GM12878 (cell line): ENCODE measurements at regions of chr7 and their contacts with region 1.

Region 1: GRCh38 chr7:92809397-92810241 is 26.8 kb downstream of the CDK6 start:
- DNase-seq: peak; percentile 92
- ATAC-seq: peak; percentile 76
- H3K4me3 ChIP-seq: peak overlapping the region; percentile 37; the same call in 1 of the 2 replicates
- H3K27ac ChIP-seq: peak overlapping the region; percentile 87
- H3K4me1 ChIP-seq: peaks cover 45% of the 10 kb centered on the region
- H3K27me3 ChIP-seq: no peaks in the 10 kb centered on the region
- CTCF ChIP-seq: no peak
- EP300 ChIP-seq: peak; percentile 89 to 96; a peak in 3 of 4 replicates
- POLR2A ChIP-seq: peak; percentile 54; the same call in 1 of the 2 replicates
- RAD21 ChIP-seq: no peak

Region 2: GRCh38 chr7:92633211-92633906 is 176.3 kb before region 1 on chr7:
- CTCF ChIA-PET with region 1: interaction called, 6 read pairs
- POLR2A ChIA-PET with region 1: interaction called, 4 read pairs
- RAD21 ChIA-PET with region 1: interaction called, 18 read pairs
- SMC1A ChIA-PET with region 1: interaction called, 7 read pairs
- in situ Hi-C with region 1: loop called (anchors 10 kb)
- intact Hi-C with region 1: loop called (anchors 1 kb)
- DNase-seq: no peak
- ATAC-seq: peak; percentile 16
- H3K4me3 ChIP-seq: no peak overlapping the region
- H3K27ac ChIP-seq: peak overlapping the region; percentile 61
- H3K4me1 ChIP-seq: peaks cover 48% of the 10 kb centered on the region
- H3K27me3 ChIP-seq: no peaks in the 10 kb centered on the region
- CTCF ChIP-seq: no peak
- EP300 ChIP-seq: peak in 1 of 2 experiments; percentile 60; a peak in 2 of 4 replicates
- POLR2A ChIP-seq: no peak
- RAD21 ChIP-seq: no peak

Region 3: DNA sequence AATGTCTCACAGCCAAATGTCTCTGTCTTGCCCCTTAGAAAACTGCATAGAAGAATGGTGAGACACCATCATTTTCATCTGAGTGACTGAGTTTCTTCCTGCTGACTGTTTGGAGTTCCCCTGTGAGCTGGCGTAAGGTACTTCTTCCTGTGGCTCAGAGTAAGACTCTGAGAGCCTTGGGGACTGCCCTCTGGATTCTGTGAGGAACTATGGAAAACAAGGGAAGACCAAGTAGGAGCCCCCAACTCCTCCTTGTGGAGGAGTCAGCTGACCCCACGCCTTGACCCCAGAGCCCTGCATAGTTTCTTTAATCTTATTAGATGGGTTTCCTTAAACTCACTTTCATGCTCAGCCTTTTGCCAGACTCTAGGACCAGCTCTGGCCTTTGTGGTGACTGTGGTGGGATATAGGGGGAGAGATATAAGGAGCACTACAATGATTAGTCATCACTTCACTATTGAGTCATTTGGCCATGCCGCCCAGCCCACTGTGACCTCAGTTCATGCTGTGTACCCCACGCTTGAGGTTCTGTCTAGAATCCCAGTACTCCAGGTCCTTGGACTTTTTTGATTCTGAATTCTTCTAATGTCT is 167.6 kb before region 1 on chr7:
- CTCF ChIA-PET with region 1: interaction called, 3 read pairs
- POLR2A ChIA-PET with region 1: interaction called, 6 read pairs
- RAD21 ChIA-PET with region 1: interaction called, 5 read pairs
- SMC1A ChIA-PET with region 1: interaction called, 18 read pairs
- in situ Hi-C with region 1: loop called (anchors 10 kb)
- intact Hi-C with region 1: no loop called
- DNase-seq: no peak
- ATAC-seq: peak; percentile 83
- H3K4me3 ChIP-seq: peak overlapping the region; percentile 39
- H3K27ac ChIP-seq: peak overlapping the region; percentile 73
- H3K4me1 ChIP-seq: peaks cover 25% of the 10 kb centered on the region
- H3K27me3 ChIP-seq: no peaks in the 10 kb centered on the region
- CTCF ChIP-seq: no peak
- EP300 ChIP-seq: peak; percentile 60 to 73; a peak in 3 of 4 replicates
- POLR2A ChIP-seq: no peak
- RAD21 ChIP-seq: 0 out of 2 replicates have a peak, but pooled peaks have one; percentile 4

Region 4: DNA sequence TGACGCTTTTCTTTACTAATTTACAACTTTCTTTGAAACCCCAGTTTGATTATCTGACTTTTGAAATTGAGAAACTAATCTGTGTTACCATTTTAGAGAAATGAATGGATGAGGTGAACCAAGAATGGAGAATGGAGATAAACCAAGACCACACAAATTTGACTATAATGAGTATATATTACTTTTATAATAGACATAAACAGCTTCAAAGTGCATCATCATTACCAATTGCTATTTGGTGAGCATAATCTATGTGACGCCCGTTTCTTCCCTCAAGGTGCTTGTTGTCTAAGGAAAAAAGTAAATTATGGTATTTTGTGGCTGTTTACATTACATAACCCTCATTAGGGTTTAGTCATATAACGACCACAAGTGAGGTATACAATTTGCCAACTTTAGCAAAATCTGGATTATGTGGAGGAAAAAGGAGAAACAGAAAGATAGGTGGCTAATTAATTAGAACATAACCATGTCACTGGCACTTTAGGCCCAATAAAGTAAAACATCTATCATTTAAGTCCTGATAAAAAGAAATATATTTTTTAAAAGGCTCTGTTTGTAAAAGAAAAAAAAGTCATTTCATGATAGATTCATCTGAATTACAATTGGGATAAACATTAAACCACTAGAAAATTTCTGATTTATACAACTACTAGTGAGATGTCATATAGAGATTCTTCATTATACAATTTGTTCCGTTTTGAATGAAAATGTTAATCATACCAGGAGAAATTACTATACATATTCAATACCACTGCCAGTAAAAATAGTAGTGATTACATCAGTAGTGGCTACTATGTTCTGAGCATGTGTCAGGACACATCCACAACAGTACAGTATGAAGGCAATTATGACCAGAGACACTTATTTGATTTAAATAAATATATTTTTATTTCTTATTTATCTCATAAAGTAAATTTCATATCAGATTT is 101.2 kb before region 1 on chr7:
- CTCF ChIA-PET with region 1: no interaction called
- POLR2A ChIA-PET with region 1: no interaction called
- RAD21 ChIA-PET with region 1: no interaction called
- SMC1A ChIA-PET with region 1: interaction called, 3 read pairs
- in situ Hi-C with region 1: no loop called
- intact Hi-C with region 1: loop called (anchors 5 kb)
- DNase-seq: no peak
- ATAC-seq: peak; percentile 87
- H3K4me3 ChIP-seq: no peak overlapping the region
- H3K27ac ChIP-seq: no peak overlapping the region
- H3K4me1 ChIP-seq: peaks cover 5% of the 10 kb centered on the region; the same call in 1 of the 2 replicates
- H3K27me3 ChIP-seq: no peaks in the 10 kb centered on the region
- CTCF ChIP-seq: no peak
- EP300 ChIP-seq: no peak
- POLR2A ChIP-seq: no peak
- RAD21 ChIP-seq: no peak

Region 5: GRCh38 chr7:92720604-92721350 is 88.8 kb before region 1 on chr7:
- CTCF ChIA-PET with region 1: interaction called, 4 read pairs
- POLR2A ChIA-PET with region 1: no interaction called
- RAD21 ChIA-PET with region 1: interaction called, 7 read pairs
- SMC1A ChIA-PET with region 1: interaction called, 33 read pairs
- in situ Hi-C with region 1: no loop called
- intact Hi-C with region 1: no loop called
- DNase-seq: no peak
- ATAC-seq: peak; percentile 79
- H3K4me3 ChIP-seq: no peak overlapping the region
- H3K27ac ChIP-seq: peak overlapping the region; percentile 67
- H3K4me1 ChIP-seq: peaks cover 31% of the 10 kb centered on the region
- H3K27me3 ChIP-seq: no peaks in the 10 kb centered on the region
- CTCF ChIP-seq: peak in 1 of 3 experiments; percentile 21; a peak in 2 of 6 replicates
- EP300 ChIP-seq: 0 out of 4 replicates have a peak, but pooled peaks of 1 of the 2 experiments have one; percentile 17
- POLR2A ChIP-seq: no peak
- RAD21 ChIP-seq: peak; percentile 65

Region 6: DNA sequence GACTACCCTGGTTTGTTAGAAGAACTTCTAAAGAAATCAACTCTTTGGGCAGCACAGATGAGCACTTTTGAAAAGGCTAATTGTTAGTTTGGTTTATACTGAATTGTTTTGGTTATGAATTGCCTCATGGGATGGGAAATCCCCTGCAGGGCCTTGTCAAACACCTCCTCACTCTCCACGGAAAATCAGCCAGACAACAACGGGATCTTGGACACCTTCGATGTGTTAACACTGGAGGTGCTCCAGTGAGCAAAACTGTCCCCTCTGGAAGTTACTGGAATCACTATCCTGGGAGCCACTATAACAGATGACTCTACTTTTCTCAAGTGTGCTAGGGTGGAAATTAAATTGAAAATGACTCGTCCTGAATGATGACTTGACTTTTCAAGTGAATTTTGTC is 11.9 kb before region 1 on chr7:
- CTCF ChIA-PET with region 1: interaction called, 7 read pairs
- POLR2A ChIA-PET with region 1: interaction called, 7 read pairs
- RAD21 ChIA-PET with region 1: interaction called, 9 read pairs
- SMC1A ChIA-PET with region 1: interaction called, 24 read pairs
- in situ Hi-C with region 1: no loop called
- intact Hi-C with region 1: no loop called
- DNase-seq: no peak
- ATAC-seq: peak; percentile 55
- H3K4me3 ChIP-seq: 0 out of 2 replicates have a peak overlapping the region, but pooled peaks have one; percentile 3
- H3K27ac ChIP-seq: peak overlapping the region; percentile 45; the same call in 1 of the 2 replicates
- H3K4me1 ChIP-seq: peaks cover 22% of the 10 kb centered on the region
- H3K27me3 ChIP-seq: no peaks in the 10 kb centered on the region
- CTCF ChIP-seq: no peak
- EP300 ChIP-seq: no peak
- POLR2A ChIP-seq: no peak
- RAD21 ChIP-seq: no peak

Region 7: DNA sequence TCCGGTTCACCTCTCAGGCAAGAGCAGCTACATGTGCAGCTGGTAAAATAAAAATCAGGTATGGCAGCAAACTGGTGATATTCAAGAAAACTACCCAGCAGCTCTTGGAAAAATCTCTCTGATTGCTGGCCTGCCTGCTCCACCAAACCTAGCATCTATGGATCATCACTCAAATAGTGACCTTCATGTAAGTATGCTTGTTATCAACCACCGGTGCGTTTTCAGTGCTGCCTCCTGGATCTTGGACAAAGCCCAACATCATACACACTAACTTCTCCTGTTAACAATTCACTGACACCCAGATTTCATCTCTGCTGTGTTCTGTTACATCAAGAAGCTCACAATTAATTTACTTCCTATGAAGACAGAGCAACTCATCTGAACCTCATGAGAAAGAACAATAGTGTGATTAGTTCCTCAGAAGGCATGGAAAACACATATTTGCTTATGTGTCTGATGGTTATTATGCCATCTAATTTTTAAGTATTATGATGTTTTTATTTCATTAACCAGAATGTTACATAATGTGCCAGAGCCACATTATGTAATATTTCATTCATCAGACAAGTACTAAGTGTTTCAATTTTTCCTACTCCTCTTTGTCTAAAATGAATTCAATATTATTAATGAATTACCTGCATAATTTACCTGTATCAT is 18.0 kb after region 1 on chr7:
- CTCF ChIA-PET with region 1: interaction called, 9 read pairs
- POLR2A ChIA-PET with region 1: interaction called, 37 read pairs
- RAD21 ChIA-PET with region 1: interaction called, 124 read pairs
- SMC1A ChIA-PET with region 1: interaction called, 83 read pairs
- in situ Hi-C with region 1: no loop called
- intact Hi-C with region 1: no loop called
- DNase-seq: no peak
- ATAC-seq: peak; percentile 2; the same call in 2 of the 3 replicates
- H3K4me3 ChIP-seq: no peak overlapping the region
- H3K27ac ChIP-seq: no peak overlapping the region
- H3K4me1 ChIP-seq: peaks cover 16% of the 10 kb centered on the region
- H3K27me3 ChIP-seq: no peaks in the 10 kb centered on the region
- CTCF ChIP-seq: no peak
- EP300 ChIP-seq: no peak
- POLR2A ChIP-seq: no peak
- RAD21 ChIP-seq: no peak

Region 8: GRCh38 chr7:93165447-93165846 is 355.8 kb after region 1 on chr7:
- CTCF ChIA-PET with region 1: no interaction called
- POLR2A ChIA-PET with region 1: no interaction called
- RAD21 ChIA-PET with region 1: no interaction called
- SMC1A ChIA-PET with region 1: no interaction called
- in situ Hi-C with region 1: no loop called
- intact Hi-C with region 1: no loop called
- DNase-seq: peak; percentile 77
- ATAC-seq: peak; percentile 99
- H3K4me3 ChIP-seq: 0 out of 2 replicates have a peak overlapping the region, but pooled peaks have one; percentile 33
- H3K27ac ChIP-seq: peak overlapping the region; percentile 80; the same call in 1 of the 2 replicates
- H3K4me1 ChIP-seq: peaks cover 2% of the 10 kb centered on the region; the same call in 1 of the 2 replicates
- H3K27me3 ChIP-seq: no peaks in the 10 kb centered on the region
- CTCF ChIP-seq: no peak
- EP300 ChIP-seq: peak in 1 of 2 experiments; percentile 17; a peak in 2 of 4 replicates
- POLR2A ChIP-seq: no peak
- RAD21 ChIP-seq: no peak